ENCODE measurements at regions of chr16 and their contacts with region 1.

Region 1: DNA sequence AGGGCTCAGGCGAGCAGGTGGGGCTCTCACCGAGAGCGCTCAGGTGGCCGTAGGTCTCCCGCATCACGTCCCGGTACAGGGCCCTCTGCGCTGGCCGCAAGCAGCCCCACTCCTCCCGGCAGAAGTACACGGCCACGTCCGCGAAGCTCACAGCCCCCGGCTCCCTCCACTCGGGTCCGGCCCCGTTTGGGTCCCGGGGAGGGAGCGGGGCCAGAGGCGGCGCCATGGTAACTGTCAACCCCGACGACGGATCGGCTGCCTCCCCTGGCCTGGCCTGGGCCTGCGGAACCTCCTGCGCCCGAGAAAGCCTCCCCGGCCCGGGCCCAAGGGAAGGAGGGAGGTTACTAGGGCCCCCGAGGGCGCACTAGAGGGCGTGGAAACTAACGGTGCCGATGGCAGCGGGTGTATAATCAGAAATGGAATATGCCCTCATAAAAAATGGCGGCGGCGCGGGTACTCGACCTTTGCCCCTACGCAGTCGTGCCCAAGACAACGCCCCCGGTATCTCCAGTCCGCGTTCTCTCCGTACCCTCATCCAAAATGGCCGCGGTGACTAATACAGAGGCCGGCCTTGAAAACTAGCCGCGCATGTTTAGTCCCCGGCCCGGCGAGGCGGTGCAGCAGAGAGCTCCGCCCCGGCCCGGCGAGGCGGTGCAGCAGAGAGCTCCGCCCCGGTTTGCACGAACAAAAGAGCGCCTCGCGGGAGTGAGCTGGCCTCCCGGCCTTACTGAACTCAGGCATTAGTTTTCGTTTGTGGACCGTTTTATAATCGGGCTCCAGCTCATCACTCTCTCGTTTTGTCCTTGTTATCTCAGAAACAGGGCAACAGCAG is at the start of gene ZNF764:
- DNase-seq: peak; percentile 99
- H3K4me3 ChIP-seq: peak within 1 kb of the TSS; percentile 95
- H3K27ac ChIP-seq: peak within 1 kb of the TSS; percentile 95
- H3K4me1 ChIP-seq: no peaks in the 10 kb centered on the region
- H3K27me3 ChIP-seq: no peaks in the 10 kb centered on the region
- CTCF ChIP-seq: no peak
- total RNA-seq, gene ZNF764: 15.2 and 17.7 TPM in 2 replicates

Region 2: DNA sequence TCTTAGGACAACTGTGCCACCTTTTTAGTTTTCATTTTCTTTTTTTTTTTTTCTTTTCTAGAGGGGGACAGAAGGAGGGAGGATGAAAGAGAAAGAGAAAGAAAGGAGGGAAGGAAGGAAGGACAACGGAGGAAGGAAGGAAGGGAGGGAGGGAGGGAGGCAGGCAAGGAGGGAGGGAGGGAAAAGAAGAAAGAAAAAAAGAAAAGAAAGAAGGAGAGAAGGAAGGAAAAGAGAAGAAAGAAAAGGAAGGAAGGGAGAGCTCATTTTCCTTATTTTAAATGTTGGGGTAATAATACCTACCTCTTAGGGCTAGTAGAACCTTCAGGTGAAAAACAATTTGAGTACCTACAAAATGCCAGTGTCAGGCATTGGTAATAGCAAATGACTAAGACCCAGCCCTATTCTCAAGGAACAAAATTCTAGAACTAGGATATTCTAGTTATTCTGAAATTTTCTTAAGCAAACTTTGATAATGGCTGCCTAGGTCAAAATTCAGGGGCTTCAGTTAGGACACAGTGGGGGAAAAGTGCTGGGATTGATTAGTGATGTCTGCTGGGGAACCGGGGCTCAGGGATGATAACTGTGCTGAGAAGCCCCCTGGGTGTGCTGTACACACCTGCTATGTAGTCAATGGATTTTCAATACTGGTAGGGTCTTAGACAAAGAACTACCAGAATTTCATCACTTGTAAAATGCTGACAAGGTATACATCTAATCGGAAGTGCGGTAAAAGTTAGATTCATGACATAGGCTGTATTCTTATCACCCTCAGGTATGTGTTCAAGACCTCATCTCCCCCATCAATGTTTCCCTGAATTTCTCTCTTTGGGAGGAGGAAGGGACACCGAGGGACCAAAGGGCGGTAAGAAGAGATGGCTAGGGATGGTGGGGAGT is 54.5 kb before region 1 on chr16:
- CTCF ChIA-PET with region 1: no interaction called
- POLR2A ChIA-PET with region 1: interaction called, 17 read pairs
- intact Hi-C with region 1: no loop called
- DNase-seq: no peak
- H3K4me3 ChIP-seq: no peak overlapping the region
- H3K27ac ChIP-seq: no peak overlapping the region
- H3K4me1 ChIP-seq: no peaks in the 10 kb centered on the region
- H3K27me3 ChIP-seq: no peaks in the 10 kb centered on the region
- CTCF ChIP-seq: no peak

Region 3: GRCh38 chr16:30534368-30535105 is 23.6 kb before region 1 on chr16 and contains the start of gene ZNF747:
- CTCF ChIA-PET with region 1: interaction called, 6 read pairs
- POLR2A ChIA-PET with region 1: no interaction called
- intact Hi-C with region 1: loop called (anchors 1 kb)
- DNase-seq: peak; percentile 90
- H3K4me3 ChIP-seq: peak within 1 kb of the TSS; percentile 70
- H3K27ac ChIP-seq: peak within 1 kb of the TSS; percentile 93
- H3K4me1 ChIP-seq: peaks cover 9% of the 10 kb centered on the region
- H3K27me3 ChIP-seq: no peaks in the 10 kb centered on the region
- CTCF ChIP-seq: no peak
- total RNA-seq, gene ZNF747: 10.6 and 12.7 TPM in 2 replicates

Region 4: DNA sequence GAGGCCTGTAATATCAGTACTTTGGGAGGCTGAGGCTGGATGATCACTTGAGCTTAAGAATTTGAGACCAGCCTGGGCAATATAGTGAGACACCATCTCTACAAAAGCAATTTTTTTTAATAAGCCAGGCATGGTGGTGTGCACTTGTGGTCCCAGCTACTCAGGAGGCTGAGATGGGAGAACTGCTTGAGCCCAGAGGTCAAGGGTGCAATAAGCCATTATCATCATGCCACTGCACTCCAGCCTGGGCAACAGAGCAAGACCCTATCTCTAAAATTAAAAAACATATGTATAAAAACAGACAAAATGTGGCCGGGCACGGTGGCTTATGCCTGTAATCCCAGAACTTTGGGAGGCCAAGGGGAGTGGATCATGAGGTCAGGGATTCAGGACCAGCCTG is 30.5 kb after region 1 on chr16:
- CTCF ChIA-PET with region 1: no interaction called
- POLR2A ChIA-PET with region 1: interaction called, 15 read pairs
- intact Hi-C with region 1: no loop called
- DNase-seq: no peak
- H3K4me3 ChIP-seq: no peak overlapping the region
- H3K27ac ChIP-seq: no peak overlapping the region
- H3K4me1 ChIP-seq: peaks cover 5% of the 10 kb centered on the region
- H3K27me3 ChIP-seq: no peaks in the 10 kb centered on the region
- CTCF ChIP-seq: no peak

Region 5: GRCh38 chr16:30615358-30616091 is 57.4 kb after region 1 on chr16:
- CTCF ChIA-PET with region 1: no interaction called
- POLR2A ChIA-PET with region 1: no interaction called
- intact Hi-C with region 1: no loop called
- DNase-seq: peak; percentile 81
- H3K4me3 ChIP-seq: no peak overlapping the region
- H3K27ac ChIP-seq: no peak overlapping the region
- H3K4me1 ChIP-seq: no peaks in the 10 kb centered on the region
- H3K27me3 ChIP-seq: no peaks in the 10 kb centered on the region
- CTCF ChIP-seq: peak; percentile 93

Region 6: DNA sequence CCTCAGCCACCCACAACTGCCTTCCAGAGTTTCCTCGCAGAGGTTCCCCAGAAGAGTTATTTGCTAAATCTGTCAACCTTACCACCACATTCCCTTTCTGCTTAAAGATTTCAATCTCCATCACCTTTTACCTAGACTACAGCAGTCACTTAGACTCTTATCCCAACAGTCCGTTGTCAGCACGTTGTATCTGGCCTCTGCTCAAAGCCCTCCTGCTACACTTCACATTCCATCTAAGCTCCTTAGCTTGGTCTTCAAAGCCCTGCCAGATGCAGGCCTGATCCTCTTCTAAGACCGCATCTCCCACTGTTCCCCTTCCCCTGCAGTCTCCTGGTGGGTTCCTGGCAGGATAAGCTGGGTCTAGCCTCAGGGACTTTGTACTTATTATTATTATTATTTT is 130.5 kb after region 1 on chr16:
- CTCF ChIA-PET with region 1: no interaction called
- POLR2A ChIA-PET with region 1: no interaction called
- intact Hi-C with region 1: no loop called
- DNase-seq: no peak
- H3K4me3 ChIP-seq: no peak overlapping the region
- H3K27ac ChIP-seq: no peak overlapping the region
- H3K4me1 ChIP-seq: peaks cover 3% of the 10 kb centered on the region
- H3K27me3 ChIP-seq: no peaks in the 10 kb centered on the region
- CTCF ChIP-seq: no peak

Region 7: GRCh38 chr16:30715737-30716445 is 157.7 kb after region 1 on chr16:
- CTCF ChIA-PET with region 1: no interaction called
- POLR2A ChIA-PET with region 1: no interaction called
- intact Hi-C with region 1: no loop called
- DNase-seq: peak; percentile 72
- H3K4me3 ChIP-seq: no peak overlapping the region
- H3K27ac ChIP-seq: peak overlapping the region; percentile 58
- H3K4me1 ChIP-seq: no peaks in the 10 kb centered on the region
- H3K27me3 ChIP-seq: no peaks in the 10 kb centered on the region
- CTCF ChIP-seq: no peak

Region 8: GRCh38 chr16:30747799-30748634 is 189.8 kb after region 1 on chr16 and contains the start of gene PHKG2:
- CTCF ChIA-PET with region 1: no interaction called
- POLR2A ChIA-PET with region 1: no interaction called
- intact Hi-C with region 1: no loop called
- DNase-seq: peak; percentile 100
- H3K4me3 ChIP-seq: peak within 1 kb of the TSS; percentile 64
- H3K27ac ChIP-seq: peak within 1 kb of the TSS; percentile 84
- H3K4me1 ChIP-seq: no peaks in the 10 kb centered on the region
- H3K27me3 ChIP-seq: no peaks in the 10 kb centered on the region
- CTCF ChIP-seq: no peak
- total RNA-seq, gene PHKG2: 35.3 and 37.8 TPM in 2 replicates